ENCODE measurements at regions of chr13 and their contacts with region 1.

Region 1: DNA sequence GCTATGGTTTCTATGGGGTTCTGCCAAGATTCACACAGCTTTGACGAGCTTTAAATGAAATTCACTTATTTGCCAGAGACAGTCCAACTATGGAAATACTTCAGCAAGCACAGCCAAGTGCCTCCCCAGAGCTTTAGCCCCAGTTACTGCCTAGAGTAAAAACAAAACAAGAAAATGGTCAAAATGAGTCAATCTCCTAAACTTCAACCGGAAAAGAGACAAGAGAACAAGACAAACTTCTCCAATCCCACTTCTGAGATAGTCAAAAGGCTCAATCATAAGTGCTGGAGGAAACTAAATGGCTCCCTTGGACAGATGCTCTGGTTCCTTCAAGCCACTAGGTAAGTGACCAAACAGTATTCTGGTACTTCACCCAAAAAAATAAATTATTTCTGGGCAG is 65.8 kb downstream of the KATNAL1 start:
- DNase-seq: peak; percentile 56
- ATAC-seq: peak; percentile 93
- H3K4me3 ChIP-seq: no peak overlapping the region
- H3K27ac ChIP-seq: no peak overlapping the region
- H3K4me1 ChIP-seq: peaks cover 2% of the 10 kb centered on the region; the same call in 1 of the 2 replicates
- H3K27me3 ChIP-seq: no peaks in the 10 kb centered on the region
- CTCF ChIP-seq: no peak
- EP300 ChIP-seq: peak in 1 of 2 experiments; percentile 60; a peak in 1 of 4 replicates
- POLR2A ChIP-seq: no peak
- RAD21 ChIP-seq: no peak; the same call in 1 of the 2 replicates

Region 2: DNA sequence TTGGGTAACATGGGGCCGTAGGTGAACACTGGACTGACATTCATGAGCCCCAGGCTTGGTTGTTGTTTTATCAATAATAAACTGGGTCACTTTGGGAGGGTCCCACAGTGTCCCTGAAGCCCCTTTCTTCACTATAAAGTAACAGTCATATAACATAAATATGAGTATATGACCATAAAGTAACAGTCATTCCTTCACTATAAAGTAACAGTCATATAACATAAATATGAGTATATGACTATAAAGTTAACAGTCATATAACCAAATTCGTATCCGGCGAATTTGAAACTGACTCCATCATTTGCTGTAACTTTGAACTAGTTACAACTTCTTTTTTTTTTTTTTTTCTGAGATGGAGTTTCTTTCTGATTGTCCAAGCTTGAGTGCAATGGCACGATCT is 144.4 kb before region 1 on chr13:
- CTCF ChIA-PET with region 1: no interaction called
- POLR2A ChIA-PET with region 1: no interaction called
- RAD21 ChIA-PET with region 1: no interaction called
- SMC1A ChIA-PET with region 1: no interaction called
- in situ Hi-C with region 1: no loop called
- intact Hi-C with region 1: no loop called
- DNase-seq: no peak
- ATAC-seq: no peak
- H3K4me3 ChIP-seq: no peak overlapping the region
- H3K27ac ChIP-seq: no peak overlapping the region
- H3K4me1 ChIP-seq: no peaks in the 10 kb centered on the region
- H3K27me3 ChIP-seq: no peaks in the 10 kb centered on the region; a peak in 1 of 4 replicates
- CTCF ChIP-seq: no peak
- EP300 ChIP-seq: no peak
- POLR2A ChIP-seq: no peak
- RAD21 ChIP-seq: no peak

Region 3: DNA sequence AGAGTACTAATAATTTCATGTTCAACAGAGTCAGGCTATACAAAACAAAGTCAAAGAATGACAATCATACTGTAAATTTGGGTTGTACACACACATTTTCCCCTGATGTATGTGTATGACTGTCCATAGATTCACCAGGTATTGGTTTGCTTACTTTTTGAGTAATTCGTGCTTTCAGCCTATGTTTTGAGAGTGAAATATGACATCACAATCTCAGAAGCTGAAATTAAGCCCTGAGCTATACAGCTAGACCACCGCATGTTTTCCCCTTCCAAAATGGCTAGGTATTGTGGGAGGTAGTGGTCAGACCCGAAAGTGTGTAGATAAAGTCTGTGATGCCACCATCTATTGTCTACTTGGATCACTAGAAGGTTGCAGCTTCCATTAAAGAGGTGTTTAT is 37.0 kb before region 1 on chr13:
- CTCF ChIA-PET with region 1: no interaction called
- POLR2A ChIA-PET with region 1: no interaction called
- RAD21 ChIA-PET with region 1: interaction called, 3 read pairs
- SMC1A ChIA-PET with region 1: interaction called, 3 read pairs
- in situ Hi-C with region 1: no loop called
- intact Hi-C with region 1: loop called (anchors 5 kb)
- DNase-seq: no peak
- ATAC-seq: peak; percentile 96
- H3K4me3 ChIP-seq: no peak overlapping the region
- H3K27ac ChIP-seq: no peak overlapping the region
- H3K4me1 ChIP-seq: no peaks in the 10 kb centered on the region
- H3K27me3 ChIP-seq: no peaks in the 10 kb centered on the region
- CTCF ChIP-seq: no peak
- EP300 ChIP-seq: no peak; a peak in 1 of 4 replicates
- POLR2A ChIP-seq: no peak
- RAD21 ChIP-seq: 0 out of 2 replicates have a peak, but pooled peaks have one; percentile 2

Region 4: DNA sequence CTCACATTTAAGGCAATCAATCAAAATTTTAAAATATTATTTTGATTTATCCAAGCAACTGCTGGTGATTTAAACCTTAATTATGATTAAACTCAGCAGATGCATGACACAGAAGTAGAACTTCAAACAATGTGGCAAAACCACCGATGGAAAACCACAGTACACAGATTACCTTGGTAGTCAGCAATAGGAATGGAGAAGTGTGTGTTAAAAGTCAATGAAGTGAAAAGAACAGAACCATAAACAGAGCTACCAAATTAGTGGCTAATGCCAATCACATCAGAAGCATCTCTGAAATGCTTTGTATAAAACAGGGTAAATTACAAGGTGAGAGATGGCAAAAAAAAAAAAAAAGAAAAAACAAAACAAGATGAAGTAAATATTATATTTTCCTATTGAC is 34.6 kb after region 1 on chr13:
- CTCF ChIA-PET with region 1: no interaction called
- POLR2A ChIA-PET with region 1: no interaction called
- RAD21 ChIA-PET with region 1: no interaction called
- SMC1A ChIA-PET with region 1: no interaction called
- in situ Hi-C with region 1: no loop called
- intact Hi-C with region 1: no loop called
- DNase-seq: peak; percentile 33
- ATAC-seq: peak; percentile 92
- H3K4me3 ChIP-seq: no peak overlapping the region
- H3K27ac ChIP-seq: no peak overlapping the region
- H3K4me1 ChIP-seq: no peaks in the 10 kb centered on the region
- H3K27me3 ChIP-seq: no peaks in the 10 kb centered on the region
- CTCF ChIP-seq: no peak
- EP300 ChIP-seq: 0 out of 4 replicates have a peak, but pooled peaks of 1 of the 2 experiments have one; percentile 15
- POLR2A ChIP-seq: no peak
- RAD21 ChIP-seq: no peak

Region 5: GRCh38 chr13:30292325-30292724 is 50.8 kb after region 1 on chr13:
- CTCF ChIA-PET with region 1: no interaction called
- POLR2A ChIA-PET with region 1: no interaction called
- RAD21 ChIA-PET with region 1: no interaction called
- SMC1A ChIA-PET with region 1: no interaction called
- in situ Hi-C with region 1: no loop called
- intact Hi-C with region 1: no loop called
- DNase-seq: no peak
- ATAC-seq: peak; percentile 55; the same call in 2 of the 3 replicates
- H3K4me3 ChIP-seq: no peak overlapping the region
- H3K27ac ChIP-seq: no peak overlapping the region
- H3K4me1 ChIP-seq: no peaks in the 10 kb centered on the region
- H3K27me3 ChIP-seq: no peaks in the 10 kb centered on the region
- CTCF ChIP-seq: no peak
- EP300 ChIP-seq: no peak
- POLR2A ChIP-seq: no peak
- RAD21 ChIP-seq: no peak

Region 6: DNA sequence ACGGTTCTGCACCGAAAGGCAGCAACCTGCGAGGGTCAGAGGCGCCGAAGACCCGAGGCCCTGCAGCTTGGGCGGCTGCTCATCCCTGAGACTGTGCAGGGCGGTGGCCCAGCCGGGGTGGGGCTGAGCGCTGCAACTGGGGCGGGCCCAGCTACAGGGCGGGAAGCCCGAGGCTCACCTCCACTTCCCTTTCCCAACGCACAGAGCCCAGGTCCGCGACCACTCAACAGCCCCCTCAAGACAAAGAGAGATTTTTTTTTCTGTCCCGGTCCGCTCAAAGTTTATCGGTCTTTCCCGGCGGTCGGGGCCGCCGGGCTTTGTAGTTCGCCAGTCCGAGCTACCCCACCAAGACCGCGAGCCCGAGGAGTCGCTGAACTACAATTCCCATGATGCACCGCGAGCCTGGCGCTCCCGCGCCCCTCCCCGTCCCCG is 65.2 kb after region 1 on chr13:
- CTCF ChIA-PET with region 1: no interaction called
- POLR2A ChIA-PET with region 1: interaction called, 3 read pairs
- RAD21 ChIA-PET with region 1: no interaction called
- SMC1A ChIA-PET with region 1: no interaction called
- in situ Hi-C with region 1: no loop called
- intact Hi-C with region 1: loop called (anchors 5 kb)
- DNase-seq: peak; percentile 66
- ATAC-seq: peak; percentile 89
- H3K4me3 ChIP-seq: peak overlapping the region; percentile 67
- H3K27ac ChIP-seq: peak overlapping the region; percentile 74
- H3K4me1 ChIP-seq: peaks cover 18% of the 10 kb centered on the region
- H3K27me3 ChIP-seq: no peaks in the 10 kb centered on the region
- CTCF ChIP-seq: no peak
- EP300 ChIP-seq: no peak
- POLR2A ChIP-seq: peak; percentile 71
- RAD21 ChIP-seq: no peak

Measured in GM12878 (cell line).